ENCODE measurements at regions of chr13 and their contacts with region 1.

Region 1: GRCh38 chr13:95660981-95661581 is 15.9 kb upstream of the DNAJC3 start:
- DNase-seq: no peak
- ATAC-seq: peak; percentile 53; the same call in 2 of the 3 replicates
- H3K4me3 ChIP-seq: no peak overlapping the region
- H3K27ac ChIP-seq: no peak overlapping the region
- H3K4me1 ChIP-seq: no peaks in the 10 kb centered on the region
- H3K27me3 ChIP-seq: no peaks in the 10 kb centered on the region
- CTCF ChIP-seq: peak; percentile 50 to 60 (median 54)
- EP300 ChIP-seq: no peak
- POLR2A ChIP-seq: no peak
- RAD21 ChIP-seq: peak; percentile 68

Region 2: DNA sequence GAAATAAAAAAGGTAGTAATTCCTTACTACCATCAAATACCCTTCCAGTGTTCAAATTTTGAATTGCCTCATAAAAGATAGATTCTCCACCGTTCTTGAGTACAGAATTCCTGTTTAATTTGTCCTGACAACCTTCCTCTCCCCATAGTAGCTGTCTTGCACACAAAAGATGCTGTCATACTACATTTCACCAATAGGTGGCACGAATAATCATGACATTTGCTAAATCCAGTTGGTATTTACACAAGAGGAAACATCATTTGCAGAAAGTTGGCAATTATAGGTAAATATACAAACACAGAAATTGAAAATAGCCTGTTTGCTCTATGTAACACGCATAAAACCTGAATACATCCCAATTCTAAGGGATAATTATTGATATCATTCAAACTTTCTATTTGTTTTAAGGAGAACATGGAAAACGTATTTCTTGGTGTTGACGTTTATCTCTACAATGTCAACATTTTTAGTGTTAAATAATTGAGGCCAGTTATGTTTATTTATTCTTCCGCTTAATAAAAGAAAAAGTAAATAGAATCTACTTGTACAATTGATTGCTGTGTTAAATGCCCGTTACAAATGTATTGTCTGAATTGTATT is 166.9 kb before region 1 on chr13:
- CTCF ChIA-PET with region 1: no interaction called
- POLR2A ChIA-PET with region 1: no interaction called
- RAD21 ChIA-PET with region 1: interaction called, 3 read pairs
- SMC1A ChIA-PET with region 1: no interaction called
- in situ Hi-C with region 1: no loop called
- intact Hi-C with region 1: loop called (anchors 5 kb)
- DNase-seq: no peak
- ATAC-seq: peak; percentile 76
- H3K4me3 ChIP-seq: no peak overlapping the region
- H3K27ac ChIP-seq: no peak overlapping the region
- H3K4me1 ChIP-seq: no peaks in the 10 kb centered on the region
- H3K27me3 ChIP-seq: no peaks in the 10 kb centered on the region; a peak in 1 of 4 replicates
- CTCF ChIP-seq: peak; percentile 65 to 72 (median 69)
- EP300 ChIP-seq: no peak
- POLR2A ChIP-seq: no peak
- RAD21 ChIP-seq: peak; percentile 65

Measured in GM12878 (cell line).